ENCODE measurements at regions of chr3 and their contacts with region 1.

Region 1: GRCh38 chr3:190883973-190884832 is 21.7 kb upstream of the GMNC start:
- DNase-seq: peak; percentile 38
- H3K4me3 ChIP-seq: no peak overlapping the region
- H3K27ac ChIP-seq: no peak overlapping the region
- H3K27me3 ChIP-seq: no peaks in the 10 kb centered on the region
- CTCF ChIP-seq: peak; percentile 97

Region 2: DNA sequence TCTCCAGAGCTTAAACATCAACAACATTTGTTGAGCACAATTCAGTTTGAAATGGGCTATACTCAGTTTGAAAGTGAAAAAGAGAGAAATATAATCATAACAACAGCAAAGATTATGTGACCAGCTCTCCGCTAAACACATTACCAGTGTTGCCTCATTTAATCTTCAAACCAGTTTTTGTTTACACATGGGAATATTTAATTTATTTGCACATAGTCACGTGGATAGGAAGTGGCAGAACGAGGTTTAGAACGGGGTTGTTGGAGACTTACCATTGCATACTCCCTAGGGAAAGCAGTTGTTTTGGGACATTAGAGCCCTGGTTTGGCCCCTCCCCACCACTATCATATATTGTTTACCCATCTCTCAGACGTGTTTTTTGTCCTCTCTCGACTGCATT is 293.1 kb before region 1 on chr3:
- CTCF ChIA-PET with region 1: no interaction called
- POLR2A ChIA-PET with region 1: no interaction called
- DNase-seq: no peak
- H3K4me3 ChIP-seq: no peak overlapping the region
- H3K27ac ChIP-seq: no peak overlapping the region
- H3K27me3 ChIP-seq: no peaks in the 10 kb centered on the region
- CTCF ChIP-seq: no peak

Region 3: GRCh38 chr3:190811775-190812480 is 72.3 kb before region 1 on chr3:
- CTCF ChIA-PET with region 1: interaction called, 15 read pairs
- POLR2A ChIA-PET with region 1: no interaction called
- DNase-seq: peak; percentile 36
- H3K4me3 ChIP-seq: peak overlapping the region; percentile 52
- H3K27ac ChIP-seq: no peak overlapping the region
- H3K27me3 ChIP-seq: no peaks in the 10 kb centered on the region
- CTCF ChIP-seq: peak; percentile 82

Region 4: GRCh38 chr3:190855151-190855550 is 29.1 kb before region 1 on chr3:
- CTCF ChIA-PET with region 1: interaction called, 16 read pairs
- POLR2A ChIA-PET with region 1: no interaction called
- DNase-seq: no peak
- H3K4me3 ChIP-seq: no peak overlapping the region
- H3K27ac ChIP-seq: no peak overlapping the region
- H3K27me3 ChIP-seq: no peaks in the 10 kb centered on the region
- CTCF ChIP-seq: no peak

Region 5: GRCh38 chr3:190862209-190863118 is 21.7 kb before region 1 on chr3 and contains the start of gene GMNC:
- CTCF ChIA-PET with region 1: interaction called, 59 read pairs
- POLR2A ChIA-PET with region 1: no interaction called
- DNase-seq: no peak
- H3K4me3 ChIP-seq: peak within 1 kb of the TSS; percentile 64
- H3K27ac ChIP-seq: no peak within 1 kb of the TSS
- H3K27me3 ChIP-seq: no peaks in the 10 kb centered on the region
- CTCF ChIP-seq: no peak
- polyA plus RNA-seq, gene GMNC: 0.02 TPM in 2 replicates

Region 6: GRCh38 chr3:190870127-190870526 is 14.1 kb before region 1 on chr3:
- CTCF ChIA-PET with region 1: interaction called, 59 read pairs
- POLR2A ChIA-PET with region 1: no interaction called
- DNase-seq: no peak
- H3K4me3 ChIP-seq: no peak overlapping the region
- H3K27ac ChIP-seq: no peak overlapping the region
- H3K27me3 ChIP-seq: no peaks in the 10 kb centered on the region
- CTCF ChIP-seq: no peak

Region 7: DNA sequence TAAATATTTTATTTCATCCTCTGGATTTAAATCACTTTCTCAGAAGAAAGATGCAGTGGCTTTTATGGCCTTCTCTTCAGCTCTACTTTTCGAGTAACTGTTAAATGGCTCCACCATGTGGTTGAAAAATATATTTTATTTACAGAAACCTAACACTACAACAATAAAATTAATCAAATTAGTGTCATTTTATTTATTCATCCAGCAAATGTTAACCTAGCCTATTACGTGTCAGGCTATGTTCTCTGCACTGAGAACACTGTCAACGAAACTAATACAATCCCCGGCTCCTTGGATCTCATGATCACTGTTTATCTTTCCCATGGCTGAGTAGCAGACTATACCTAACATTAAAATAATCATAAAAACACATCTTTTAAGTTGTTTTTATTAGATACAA is 166.8 kb after region 1 on chr3:
- CTCF ChIA-PET with region 1: interaction called, 211 read pairs
- POLR2A ChIA-PET with region 1: no interaction called
- DNase-seq: no peak
- H3K4me3 ChIP-seq: no peak overlapping the region
- H3K27ac ChIP-seq: no peak overlapping the region
- H3K27me3 ChIP-seq: no peaks in the 10 kb centered on the region
- CTCF ChIP-seq: peak; percentile 57